ENCODE measurements at regions of chr19 and their contacts with region 1.

Region 1: DNA sequence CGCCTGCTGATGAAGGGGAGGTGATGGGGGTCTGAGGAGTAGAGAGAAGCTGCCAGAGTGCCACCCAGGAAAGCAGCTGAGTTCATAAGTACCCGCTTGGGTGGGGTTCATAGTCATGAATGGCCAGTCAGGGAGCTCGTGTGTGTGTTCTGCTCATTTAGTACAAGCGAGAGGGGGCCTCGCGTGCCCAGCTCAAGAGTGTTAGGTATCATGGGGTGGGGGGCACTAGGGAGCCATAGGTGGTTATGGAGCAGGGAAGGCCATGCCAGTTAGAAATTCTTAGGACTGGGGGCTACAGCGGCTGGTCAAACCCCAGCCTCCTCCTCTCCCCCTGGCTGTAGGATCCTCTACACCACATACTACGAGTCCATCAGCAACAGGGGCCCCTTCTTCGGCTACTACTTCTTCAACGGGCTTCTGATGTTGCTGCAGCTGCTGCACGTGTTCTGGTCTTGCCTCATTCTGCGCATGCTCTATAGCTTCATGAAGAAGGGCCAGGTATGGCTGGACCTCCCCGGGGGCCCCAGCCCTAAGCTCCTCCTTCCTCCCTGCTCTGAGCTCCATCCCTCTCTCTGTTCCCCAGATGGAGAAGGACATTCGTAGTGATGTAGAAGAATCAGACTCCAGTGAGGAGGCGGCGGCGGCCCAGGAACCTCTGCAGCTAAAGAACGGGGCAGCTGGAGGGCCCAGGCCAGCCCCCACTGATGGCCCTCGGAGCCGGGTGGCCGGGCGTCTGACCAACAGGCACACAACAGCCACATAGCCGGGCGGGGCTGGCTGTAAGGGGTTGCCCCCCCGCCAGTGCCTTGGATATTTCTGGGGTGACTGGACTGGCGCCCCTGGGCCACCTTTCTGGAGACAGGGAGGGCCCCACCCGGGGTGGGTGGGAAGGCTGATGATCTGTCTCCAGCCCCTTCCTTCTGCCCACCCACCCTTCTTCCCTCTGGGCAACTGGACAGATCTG is 46.5 kb downstream of the CD320 start:
- DNase-seq: peak in 1 of 5 donors; percentile 6
- ATAC-seq: no peak
- H3K4me3 ChIP-seq: no peak overlapping the region
- H3K27ac ChIP-seq: no peak overlapping the region
- H3K4me1 ChIP-seq: peaks cover 0 to 6% (median 0%) of the 10 kb centered on the region in 12 donors
- H3K27me3 ChIP-seq: no peaks in the 10 kb centered on the region
- CTCF ChIP-seq: no peak
- POLR2A ChIP-seq: no peak

Region 2: GRCh38 chr19:8163763-8164162 is 97.9 kb before region 1 on chr19:
- intact Hi-C with region 1: no loop called
- DNase-seq: no peak
- ATAC-seq: no peak
- H3K4me3 ChIP-seq: no peak overlapping the region
- H3K27ac ChIP-seq: no peak overlapping the region
- H3K4me1 ChIP-seq: no peaks in the 10 kb centered on the region
- H3K27me3 ChIP-seq: no peaks in the 10 kb centered on the region
- CTCF ChIP-seq: no peak
- POLR2A ChIP-seq: no peak

Region 3: GRCh38 chr19:8204961-8205360 is 56.7 kb before region 1 on chr19:
- intact Hi-C with region 1: no loop called
- DNase-seq: no peak
- ATAC-seq: no peak
- H3K4me3 ChIP-seq: no peak overlapping the region
- H3K27ac ChIP-seq: no peak overlapping the region
- H3K4me1 ChIP-seq: peaks cover 0 to 16% (median 6%) of the 10 kb centered on the region in 12 donors
- H3K27me3 ChIP-seq: peaks cover 0 to 8% (median 0%) of the 10 kb centered on the region in 9 donors
- CTCF ChIP-seq: no peak
- POLR2A ChIP-seq: no peak

Region 4: GRCh38 chr19:8311461-8312376 is 50.1 kb after region 1 on chr19:
- intact Hi-C with region 1: loop called in 1 of 10 experiments (anchors 10 kb)
- DNase-seq: peak in 4 of 5 donors; percentile 60 to 79 (median 69)
- ATAC-seq: peak in 3 of 4 donors; percentile 7 to 47 (median 27)
- H3K4me3 ChIP-seq: no peak overlapping the region
- H3K27ac ChIP-seq: peak overlapping the region in 10 of 12 donors; percentile 40 to 79 (median 58)
- H3K4me1 ChIP-seq: peaks cover 3 to 49% (median 29%) of the 10 kb centered on the region in 12 donors
- H3K27me3 ChIP-seq: no peaks in the 10 kb centered on the region
- CTCF ChIP-seq: no peak
- POLR2A ChIP-seq: no peak

Region 5: GRCh38 chr19:8321060-8321985 is 59.7 kb after region 1 on chr19 and contains the starts of genes NDUFA7 and RPS28:
- intact Hi-C with region 1: loop called in 3 of 10 experiments (anchors 5 to 10 kb)
- DNase-seq: peak; percentile 96 to 99 (median 98)
- ATAC-seq: peak; percentile 93 to 96 (median 95)
- H3K4me3 ChIP-seq: peak within 1 kb of the TSS; percentile 58 to 98 (median 79)
- H3K27ac ChIP-seq: peak within 1 kb of the TSS; percentile 89 to 97 (median 92)
- H3K4me1 ChIP-seq: peaks cover 5 to 53% (median 38%) of the 10 kb centered on the region in 12 donors
- H3K27me3 ChIP-seq: no peaks in the 10 kb centered on the region
- CTCF ChIP-seq: peak; percentile 17 to 60 (median 40)
- POLR2A ChIP-seq: peak; percentile 12 to 93
- total RNA-seq, gene NDUFA7: 74.5 to 179 (median 93.6) TPM
- total RNA-seq, gene RPS28: 271 to 1,278 (median 1,186) TPM

Region 6: DNA sequence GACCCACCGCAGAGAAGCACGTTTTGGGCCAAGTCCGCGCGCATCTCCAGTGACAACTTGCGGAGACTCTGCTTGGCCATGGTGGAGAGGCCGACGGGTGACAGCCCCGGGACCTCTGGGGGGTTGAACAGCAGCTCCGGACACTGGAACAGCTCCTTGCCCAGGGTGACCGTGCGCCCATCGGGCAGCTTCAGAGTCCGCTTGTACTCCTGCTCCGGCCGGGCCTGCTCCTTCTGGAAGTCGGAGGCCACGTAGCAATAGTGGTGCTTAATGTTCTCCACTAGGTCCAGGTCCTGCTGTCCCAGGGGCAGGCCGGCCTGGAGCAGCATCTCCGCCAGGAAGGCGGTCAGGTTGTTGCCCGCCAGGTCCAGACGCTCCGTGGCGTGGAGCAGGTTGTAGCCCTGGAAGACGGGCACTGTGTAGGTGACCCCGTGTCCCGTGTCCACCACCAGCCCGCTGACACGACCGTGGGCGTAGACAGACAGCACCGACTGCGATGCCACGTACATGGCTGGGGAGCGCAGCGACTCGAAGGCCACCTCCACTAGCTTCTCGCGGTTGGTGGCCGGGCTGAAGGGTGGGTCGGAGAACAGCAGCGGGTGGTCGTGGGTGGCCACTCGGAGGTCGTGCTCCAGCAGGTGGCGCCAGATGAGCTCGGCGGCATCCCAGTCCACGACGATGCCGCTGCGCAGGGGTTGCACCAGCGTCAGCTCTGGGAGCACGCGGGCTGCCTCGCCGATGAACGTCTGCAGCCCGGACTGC is 436.2 kb after region 1 on chr19:
- intact Hi-C with region 1: loop called in 1 of 10 experiments (anchors 10 kb)
- DNase-seq: no peak
- ATAC-seq: peak in 1 of 4 donors; percentile 21
- H3K4me3 ChIP-seq: no peak overlapping the region
- H3K27ac ChIP-seq: no peak overlapping the region
- H3K4me1 ChIP-seq: peaks cover 0 to 6% (median 0%) of the 10 kb centered on the region in 12 donors
- H3K27me3 ChIP-seq: peaks cover 2 to 71% (median 9%) of the 10 kb centered on the region in 9 donors
- CTCF ChIP-seq: peak in 2 of 12 donors; percentile 15 to 23
- POLR2A ChIP-seq: no peak

Region 7: GRCh38 chr19:9075064-9075949 is 813.7 kb after region 1 on chr19:
- intact Hi-C with region 1: loop called in 1 of 10 experiments (anchors 10 kb)
- DNase-seq: peak; percentile 53 to 83 (median 66)
- ATAC-seq: peak; percentile 42 to 98 (median 94)
- H3K4me3 ChIP-seq: no peak overlapping the region
- H3K27ac ChIP-seq: peak overlapping the region in 1 of 12 donors; percentile 48
- H3K4me1 ChIP-seq: peaks cover 0 to 9% (median 7%) of the 10 kb centered on the region in 12 donors
- H3K27me3 ChIP-seq: no peaks in the 10 kb centered on the region
- CTCF ChIP-seq: no peak
- POLR2A ChIP-seq: no peak

Measured in heart left ventricle (tissue), 16 donors.